CD4-positive, alpha-beta memory T cell (primary cell): ENCODE measurements at regions of chr19 and their contacts with region 1.

Region 1: GRCh38 chr19:48445606-48446481 is at the start of gene GRWD1:
- DNase-seq: peak; percentile 91 to 99 (median 96)
- H3K4me3 ChIP-seq: peak within 1 kb of the TSS; percentile 75 to 85
- H3K4me3 Mint-ChIP-seq: peak within 1 kb of the TSS; percentile 86 to 94 (median 90)
- H3K27ac ChIP-seq: peak within 1 kb of the TSS; percentile 83
- H3K27ac Mint-ChIP-seq: peak within 1 kb of the TSS; percentile 88 to 98 (median 94)
- H3K4me1 ChIP-seq: peaks cover 25% of the 10 kb centered on the region
- H3K4me1 Mint-ChIP-seq: peaks cover 19 to 48% (median 32%) of the 10 kb centered on the region in 4 donors
- H3K27me3 ChIP-seq: no peaks in the 10 kb centered on the region
- H3K27me3 Mint-ChIP-seq: peaks cover 10 to 17% of the 10 kb centered on the region in 2 donors
- total RNA-seq, gene GRWD1: 36.2 to 39.0 TPM

Region 2: GRCh38 chr19:48391107-48391986 is 54.5 kb before region 1 on chr19 and contains the start of gene KDELR1:
- CTCF ChIA-PET with region 1: interaction called, 5 read pairs
- POLR2A ChIA-PET with region 1: interaction called, 3 read pairs
- intact Hi-C with region 1: loop called (anchors 2 kb)
- DNase-seq: peak; percentile 59 to 79 (median 66)
- H3K4me3 ChIP-seq: peak within 1 kb of the TSS; percentile 63 to 89
- H3K4me3 Mint-ChIP-seq: peak within 1 kb of the TSS; percentile 91 to 95 (median 94)
- H3K27ac ChIP-seq: peak within 1 kb of the TSS; percentile 93
- H3K27ac Mint-ChIP-seq: peak within 1 kb of the TSS; percentile 89 to 98 (median 95)
- H3K4me1 ChIP-seq: peaks cover 41% of the 10 kb centered on the region
- H3K4me1 Mint-ChIP-seq: peaks cover 15 to 49% (median 33%) of the 10 kb centered on the region in 4 donors
- H3K27me3 ChIP-seq: peaks cover 19% of the 10 kb centered on the region
- H3K27me3 Mint-ChIP-seq: peaks cover 6 to 19% of the 10 kb centered on the region in 2 donors
- total RNA-seq, gene KDELR1: 58.8 to 63.2 TPM

Region 3: DNA sequence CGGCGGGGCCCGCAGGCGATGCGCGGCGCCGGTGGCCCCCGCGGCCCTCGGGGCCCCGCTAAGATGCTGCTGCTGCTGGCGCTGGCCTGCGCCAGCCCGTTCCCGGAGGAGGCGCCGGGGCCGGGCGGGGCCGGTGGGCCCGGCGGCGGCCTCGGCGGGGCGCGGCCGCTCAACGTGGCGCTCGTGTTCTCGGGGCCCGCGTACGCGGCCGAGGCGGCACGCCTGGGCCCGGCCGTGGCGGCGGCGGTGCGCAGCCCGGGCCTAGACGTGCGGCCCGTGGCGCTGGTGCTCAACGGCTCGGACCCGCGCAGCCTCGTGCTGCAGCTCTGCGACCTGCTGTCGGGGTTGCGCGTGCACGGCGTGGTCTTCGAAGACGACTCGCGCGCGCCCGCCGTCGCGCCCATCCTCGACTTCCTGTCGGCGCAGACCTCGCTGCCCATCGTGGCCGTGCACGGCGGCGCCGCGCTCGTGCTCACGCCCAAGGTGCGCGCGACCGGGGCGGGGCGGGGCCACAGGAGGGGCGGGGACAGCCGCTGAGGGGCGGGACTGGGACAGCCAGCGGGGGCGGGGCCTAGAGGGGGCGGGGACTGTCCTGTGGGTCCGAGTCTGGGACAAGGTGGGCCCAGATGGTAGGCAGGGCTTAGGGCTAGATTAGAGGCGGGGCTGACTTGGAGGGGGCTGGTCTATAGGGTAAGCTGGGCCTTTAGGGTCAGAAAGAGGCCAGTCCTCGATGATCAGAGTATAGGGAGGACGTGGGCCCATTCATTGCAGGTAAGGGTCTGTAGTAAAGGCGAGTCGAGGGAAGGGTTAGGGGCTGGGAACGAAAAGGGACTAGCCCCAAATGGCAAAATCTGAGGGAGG is 47.2 kb before region 1 on chr19:
- CTCF ChIA-PET with region 1: no interaction called
- POLR2A ChIA-PET with region 1: interaction called, 3 read pairs
- intact Hi-C with region 1: loop called (anchors 2 kb)
- DNase-seq: peak; percentile 84 to 87 (median 87)
- H3K4me3 ChIP-seq: peak overlapping the region; percentile 55 to 79
- H3K4me3 Mint-ChIP-seq: peak overlapping the region; percentile 58 to 89 (median 65)
- H3K27ac ChIP-seq: peak overlapping the region; percentile 39
- H3K27ac Mint-ChIP-seq: peak overlapping the region; percentile 62 to 92 (median 74)
- H3K4me1 ChIP-seq: peaks cover 41% of the 10 kb centered on the region
- H3K4me1 Mint-ChIP-seq: peaks cover 23 to 58% (median 44%) of the 10 kb centered on the region in 4 donors
- H3K27me3 ChIP-seq: peaks cover 23% of the 10 kb centered on the region
- H3K27me3 Mint-ChIP-seq: peaks cover 9 to 18% of the 10 kb centered on the region in 2 donors

Region 4: GRCh38 chr19:48419158-48419920 is 26.5 kb before region 1 on chr19:
- CTCF ChIA-PET with region 1: no interaction called
- POLR2A ChIA-PET with region 1: interaction called, 3 read pairs
- intact Hi-C with region 1: loop called (anchors 1 kb)
- DNase-seq: peak; percentile 69 to 84 (median 72)
- H3K4me3 ChIP-seq: no peak overlapping the region
- H3K4me3 Mint-ChIP-seq: peak overlapping the region; percentile 81 to 94 (median 87)
- H3K27ac ChIP-seq: no peak overlapping the region
- H3K27ac Mint-ChIP-seq: peak overlapping the region in 5 of 7 donors; percentile 68 to 90 (median 83)
- H3K4me1 ChIP-seq: peaks cover 18% of the 10 kb centered on the region
- H3K4me1 Mint-ChIP-seq: peaks cover 14 to 31% (median 19%) of the 10 kb centered on the region in 4 donors
- H3K27me3 ChIP-seq: no peaks in the 10 kb centered on the region
- H3K27me3 Mint-ChIP-seq: peaks cover 0 to 2% of the 10 kb centered on the region in 2 donors

Region 5: DNA sequence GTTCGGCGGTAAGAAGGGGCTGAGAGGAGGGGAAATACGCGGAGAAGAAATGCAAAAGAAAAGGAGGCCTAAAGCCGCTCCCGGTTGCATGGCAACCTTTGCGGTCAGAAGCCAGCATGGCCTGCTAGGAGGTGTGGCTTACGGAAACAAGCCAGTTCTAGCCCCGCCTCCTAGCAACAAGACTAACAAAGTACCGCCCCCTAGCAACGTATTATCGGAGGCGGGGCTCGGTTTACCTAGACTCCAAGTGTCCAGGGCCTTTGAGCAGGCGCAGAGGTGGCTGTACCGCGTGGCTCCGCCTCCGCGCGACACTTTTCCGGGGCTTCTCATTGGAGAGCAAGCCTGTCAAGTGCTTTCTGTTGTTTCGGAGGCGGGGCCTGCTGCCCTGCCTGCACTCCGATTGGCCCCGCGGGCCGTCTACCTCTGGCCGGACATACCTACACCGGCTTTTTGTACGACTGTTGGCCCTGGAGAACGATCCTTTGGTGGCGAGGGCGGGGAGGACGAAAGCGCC is 23.0 kb after region 1 on chr19:
- CTCF ChIA-PET with region 1: no interaction called
- POLR2A ChIA-PET with region 1: interaction called, 7 read pairs
- intact Hi-C with region 1: loop called (anchors 1 kb)
- DNase-seq: peak; percentile 99 to 100 (median 100)
- H3K4me3 ChIP-seq: peak overlapping the region in 1 of 2 donors; percentile 65
- H3K4me3 Mint-ChIP-seq: peak overlapping the region; percentile 89 to 96 (median 92)
- H3K27ac ChIP-seq: peak overlapping the region; percentile 81
- H3K27ac Mint-ChIP-seq: peak overlapping the region; percentile 83 to 98 (median 95)
- H3K4me1 ChIP-seq: peaks cover 18% of the 10 kb centered on the region
- H3K4me1 Mint-ChIP-seq: peaks cover 7 to 24% (median 13%) of the 10 kb centered on the region in 4 donors
- H3K27me3 ChIP-seq: no peaks in the 10 kb centered on the region
- H3K27me3 Mint-ChIP-seq: no peaks in the 10 kb centered on the region

Region 6: GRCh38 chr19:48492925-48493717 is 47.3 kb after region 1 on chr19:
- CTCF ChIA-PET with region 1: interaction called, 3 read pairs
- POLR2A ChIA-PET with region 1: no interaction called
- intact Hi-C with region 1: loop called (anchors 2 kb)
- DNase-seq: peak; percentile 75 to 87 (median 77)
- H3K4me3 ChIP-seq: peak overlapping the region in 1 of 2 donors; percentile 47
- H3K4me3 Mint-ChIP-seq: peak overlapping the region; percentile 52 to 79 (median 70)
- H3K27ac ChIP-seq: no peak overlapping the region
- H3K27ac Mint-ChIP-seq: peak overlapping the region in 5 of 7 donors; percentile 51 to 84 (median 60)
- H3K4me1 ChIP-seq: peaks cover 40% of the 10 kb centered on the region
- H3K4me1 Mint-ChIP-seq: peaks cover 15 to 53% (median 28%) of the 10 kb centered on the region in 4 donors
- H3K27me3 ChIP-seq: peaks cover 15% of the 10 kb centered on the region
- H3K27me3 Mint-ChIP-seq: peaks cover 22 to 28% of the 10 kb centered on the region in 2 donors

Region 7: DNA sequence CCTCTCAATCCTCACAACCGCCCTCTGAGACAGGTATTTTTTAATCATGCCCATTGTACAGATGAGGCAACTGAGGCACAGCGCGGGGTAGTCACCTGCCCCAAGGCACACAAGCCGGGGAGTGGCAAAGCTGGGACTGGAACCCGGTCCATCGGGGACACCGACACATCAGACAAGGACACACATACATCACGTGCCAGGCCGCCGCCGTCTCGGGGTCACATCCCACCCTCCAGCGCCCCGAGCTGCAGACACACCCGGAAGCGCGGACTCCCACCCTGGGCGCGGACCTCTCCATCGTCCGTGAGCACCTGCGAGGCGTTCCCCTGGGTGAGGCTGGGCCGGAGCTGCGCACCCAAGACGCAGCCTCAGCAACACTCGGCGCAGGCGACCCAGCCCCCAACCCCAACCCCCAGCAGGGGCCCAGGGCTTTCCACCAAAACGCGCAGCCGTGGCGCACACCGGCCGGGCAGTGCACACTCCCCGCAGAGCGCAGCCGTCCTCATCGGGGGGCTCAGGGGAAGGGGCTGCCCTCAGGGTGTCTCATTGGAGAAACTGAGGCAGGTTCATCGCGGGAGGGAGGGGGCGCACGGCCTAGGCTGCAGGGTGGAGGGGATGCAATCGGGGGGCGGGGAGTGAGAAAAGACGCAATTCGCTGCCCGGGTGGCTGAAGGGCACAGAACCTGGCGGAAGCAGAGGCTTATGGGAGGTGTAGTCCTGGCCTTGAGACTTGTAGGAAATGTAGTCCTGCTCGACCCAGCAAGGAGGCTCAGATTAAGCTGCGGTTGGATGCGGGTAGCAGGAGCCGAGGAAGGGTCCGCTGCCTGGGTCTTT is 67.7 kb after region 1 on chr19:
- CTCF ChIA-PET with region 1: no interaction called
- POLR2A ChIA-PET with region 1: no interaction called
- intact Hi-C with region 1: loop called (anchors 5 kb)
- DNase-seq: peak; percentile 70 to 88 (median 73)
- H3K4me3 ChIP-seq: peak overlapping the region; percentile 65 to 89
- H3K4me3 Mint-ChIP-seq: no peak overlapping the region
- H3K27ac ChIP-seq: peak overlapping the region; percentile 59
- H3K27ac Mint-ChIP-seq: peak overlapping the region in 3 of 7 donors; percentile 68 to 96 (median 91)
- H3K4me1 ChIP-seq: peaks cover 27% of the 10 kb centered on the region
- H3K4me1 Mint-ChIP-seq: peaks cover 6 to 16% (median 11%) of the 10 kb centered on the region in 4 donors
- H3K27me3 ChIP-seq: no peaks in the 10 kb centered on the region
- H3K27me3 Mint-ChIP-seq: no peaks in the 10 kb centered on the region